ENCODE measurements at regions of chr10 and their contacts with region 1.

Region 1: GRCh38 chr10:86366033-86366901 is at the start of gene GRID1:
- DNase-seq: peak in 1 of 2 donors; percentile 42
- ATAC-seq: peak in 6 of 8 donors; percentile 30 to 64 (median 43)
- H3K4me3 ChIP-seq: peak within 1 kb of the TSS; percentile 23 to 65 (median 54)
- H3K27ac ChIP-seq: no peak within 1 kb of the TSS
- H3K4me1 ChIP-seq: peaks cover 0 to 43% (median 24%) of the 10 kb centered on the region in 9 donors
- H3K27me3 ChIP-seq: peaks cover 7 to 89% (median 72%) of the 10 kb centered on the region in 7 donors
- CTCF ChIP-seq: peak in 3 of 9 donors; percentile 3 to 33 (median 23)
- total RNA-seq, gene GRID1: 0.77 to 3.4 (median 1.9) TPM

Region 2: GRCh38 chr10:85786401-85786899 is 579.8 kb before region 1 on chr10:
- intact Hi-C with region 1: loop called in 6 of 10 experiments (anchors 5 to 10 kb)
- DNase-seq: no peak
- ATAC-seq: peak in 6 of 8 donors; percentile 61 to 76 (median 67)
- H3K4me3 ChIP-seq: no peak overlapping the region
- H3K27ac ChIP-seq: no peak overlapping the region
- H3K4me1 ChIP-seq: peaks cover 0 to 8% (median 0%) of the 10 kb centered on the region in 9 donors
- H3K27me3 ChIP-seq: no peaks in the 10 kb centered on the region
- CTCF ChIP-seq: peak in 8 of 9 donors; percentile 25 to 57 (median 47)

Region 3: GRCh38 chr10:85995791-85996190 is 370.5 kb before region 1 on chr10:
- intact Hi-C with region 1: loop called in 8 of 10 experiments (anchors 5 to 10 kb)
- DNase-seq: no peak
- ATAC-seq: peak in 2 of 8 donors; percentile 57 to 60
- H3K4me3 ChIP-seq: no peak overlapping the region
- H3K27ac ChIP-seq: no peak overlapping the region
- H3K4me1 ChIP-seq: peaks cover 0 to 3% (median 0%) of the 10 kb centered on the region in 9 donors
- H3K27me3 ChIP-seq: peaks cover 0 to 8% (median 0%) of the 10 kb centered on the region in 7 donors
- CTCF ChIP-seq: peak in 6 of 9 donors; percentile 34 to 54 (median 47)

Region 4: DNA sequence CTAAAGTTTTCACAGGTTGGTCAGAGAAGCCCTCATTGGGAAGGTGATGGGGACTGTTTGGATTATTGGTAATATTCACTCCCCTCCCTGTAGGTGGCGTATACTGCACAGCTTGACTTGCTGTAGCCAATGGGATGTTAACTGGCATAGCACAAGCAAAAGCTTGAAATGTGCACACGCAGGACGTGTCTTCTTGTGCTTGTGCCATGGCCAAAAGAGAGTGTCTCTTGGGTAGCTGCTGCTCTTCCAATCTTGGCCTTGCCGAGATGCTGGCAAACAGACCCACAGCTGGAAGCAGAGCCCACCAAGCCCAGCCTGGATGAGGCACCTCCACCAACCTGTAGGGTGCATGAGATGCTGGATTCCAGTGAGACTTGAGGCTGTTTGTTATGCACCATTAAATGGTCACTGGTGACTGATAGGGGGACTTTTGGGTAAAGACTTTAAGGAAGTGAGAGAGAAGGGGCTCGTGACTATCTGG is 265.6 kb before region 1 on chr10:
- intact Hi-C with region 1: loop called in 3 of 10 experiments (anchors 10 kb)
- DNase-seq: no peak
- ATAC-seq: peak in 1 of 8 donors; percentile 65
- H3K4me3 ChIP-seq: no peak overlapping the region
- H3K27ac ChIP-seq: no peak overlapping the region
- H3K4me1 ChIP-seq: no peaks in the 10 kb centered on the region
- H3K27me3 ChIP-seq: no peaks in the 10 kb centered on the region
- CTCF ChIP-seq: peak in 8 of 9 donors; percentile 9 to 54 (median 34)

Region 5: GRCh38 chr10:86385806-86386205 is 19.5 kb after region 1 on chr10:
- intact Hi-C with region 1: loop called in 1 of 10 experiments (anchors 1 kb)
- DNase-seq: no peak
- ATAC-seq: no peak
- H3K4me3 ChIP-seq: no peak overlapping the region
- H3K27ac ChIP-seq: no peak overlapping the region
- H3K4me1 ChIP-seq: peaks cover 0 to 11% (median 6%) of the 10 kb centered on the region in 9 donors
- H3K27me3 ChIP-seq: peaks cover 5 to 85% (median 61%) of the 10 kb centered on the region in 7 donors
- CTCF ChIP-seq: no peak

Measured in heart right ventricle (tissue), 16 donors.